Spleen (tissue), 13 donors: ENCODE measurements at regions of chr14 and their contacts with region 1.

Region 1: GRCh38 chr14:59126710-59127432 is 61.6 kb upstream of the DAAM1 start:
- DNase-seq: no peak
- H3K4me3 ChIP-seq: no peak overlapping the region
- H3K27ac ChIP-seq: no peak overlapping the region
- H3K4me1 ChIP-seq: peaks cover 0 to 5% (median 0%) of the 10 kb centered on the region in 6 donors
- H3K27me3 ChIP-seq: peaks cover 0 to 9% (median 0%) of the 10 kb centered on the region in 7 donors
- CTCF ChIP-seq: peak; percentile 65 to 90 (median 80)
- POLR2A ChIP-seq: no peak

Region 2: GRCh38 chr14:59175404-59175803 is 48.5 kb after region 1 on chr14:
- intact Hi-C with region 1: no loop called
- DNase-seq: no peak
- H3K4me3 ChIP-seq: no peak overlapping the region
- H3K27ac ChIP-seq: peak overlapping the region in 1 of 8 donors; percentile 1
- H3K4me1 ChIP-seq: no peaks in the 10 kb centered on the region
- H3K27me3 ChIP-seq: no peaks in the 10 kb centered on the region
- CTCF ChIP-seq: no peak
- POLR2A ChIP-seq: no peak

Region 3: DNA sequence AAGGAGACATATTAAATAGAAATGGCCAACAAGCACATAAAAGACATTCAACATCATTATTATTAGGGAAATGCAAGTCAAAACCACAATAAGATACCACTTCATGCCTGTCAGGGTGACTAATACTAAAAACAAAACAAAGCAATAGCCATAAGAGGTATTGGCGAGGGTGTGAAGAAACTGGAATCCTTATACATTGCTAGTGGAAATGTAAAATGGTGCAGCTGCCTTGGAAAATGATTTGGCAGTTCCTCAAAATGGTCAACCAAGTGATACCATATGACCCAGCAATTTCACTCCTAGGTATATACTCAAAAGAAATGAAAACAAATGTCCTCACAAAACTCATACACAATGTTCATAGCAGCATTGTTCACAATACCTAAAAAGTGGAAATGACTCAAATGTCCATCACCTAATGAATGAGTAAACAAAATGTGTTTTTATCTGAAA is 311.4 kb after region 1 on chr14:
- intact Hi-C with region 1: loop called (anchors 2 kb)
- DNase-seq: no peak
- H3K4me3 ChIP-seq: no peak overlapping the region
- H3K27ac ChIP-seq: no peak overlapping the region
- H3K4me1 ChIP-seq: peaks cover 0 to 6% (median 0%) of the 10 kb centered on the region in 6 donors
- H3K27me3 ChIP-seq: no peaks in the 10 kb centered on the region
- CTCF ChIP-seq: no peak
- POLR2A ChIP-seq: no peak